A673 (cell line): ENCODE measurements at regions of chr17 and their contacts with region 1.

Region 1: DNA sequence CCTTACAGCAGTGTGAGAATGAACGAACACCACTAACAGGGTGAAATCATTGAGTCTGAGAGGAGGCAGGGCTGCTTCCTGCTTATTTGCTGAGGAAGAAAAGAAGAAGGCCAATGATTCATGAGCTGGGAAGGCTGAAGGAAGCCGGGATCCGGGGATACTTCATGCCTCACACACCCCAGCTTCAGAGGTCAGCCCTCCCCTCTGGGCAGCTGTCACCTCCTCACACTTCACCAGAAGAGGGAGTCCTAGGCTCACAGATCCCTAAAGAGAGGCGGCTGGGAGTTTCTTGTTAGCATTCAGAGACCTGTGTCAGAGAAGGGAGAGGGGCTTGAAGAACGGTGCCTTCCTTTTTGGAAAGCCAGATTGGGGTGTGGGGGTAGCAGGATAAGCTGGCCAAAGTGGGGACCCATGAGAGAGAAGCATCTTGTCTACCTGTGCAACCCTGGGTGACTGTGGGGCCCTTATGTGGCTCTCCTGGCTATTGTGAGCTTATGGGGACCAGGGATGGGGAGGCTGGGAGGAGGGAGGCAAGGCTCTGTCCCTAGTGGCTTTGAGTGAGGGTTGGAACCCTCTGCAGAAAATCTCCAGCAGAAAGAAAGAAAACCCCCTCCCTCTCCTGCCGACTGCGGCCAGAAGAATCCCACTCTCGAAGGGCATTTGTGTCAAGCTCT is 94.6 kb downstream of the RGS9 start:
- DNase-seq: peak; percentile 81
- H3K4me3 ChIP-seq: no peak overlapping the region
- H3K27ac ChIP-seq: no peak overlapping the region
- H3K4me1 ChIP-seq: peaks cover 9% of the 10 kb centered on the region
- H3K27me3 ChIP-seq: no peaks in the 10 kb centered on the region
- CTCF ChIP-seq: peak; percentile 82

Region 2: DNA sequence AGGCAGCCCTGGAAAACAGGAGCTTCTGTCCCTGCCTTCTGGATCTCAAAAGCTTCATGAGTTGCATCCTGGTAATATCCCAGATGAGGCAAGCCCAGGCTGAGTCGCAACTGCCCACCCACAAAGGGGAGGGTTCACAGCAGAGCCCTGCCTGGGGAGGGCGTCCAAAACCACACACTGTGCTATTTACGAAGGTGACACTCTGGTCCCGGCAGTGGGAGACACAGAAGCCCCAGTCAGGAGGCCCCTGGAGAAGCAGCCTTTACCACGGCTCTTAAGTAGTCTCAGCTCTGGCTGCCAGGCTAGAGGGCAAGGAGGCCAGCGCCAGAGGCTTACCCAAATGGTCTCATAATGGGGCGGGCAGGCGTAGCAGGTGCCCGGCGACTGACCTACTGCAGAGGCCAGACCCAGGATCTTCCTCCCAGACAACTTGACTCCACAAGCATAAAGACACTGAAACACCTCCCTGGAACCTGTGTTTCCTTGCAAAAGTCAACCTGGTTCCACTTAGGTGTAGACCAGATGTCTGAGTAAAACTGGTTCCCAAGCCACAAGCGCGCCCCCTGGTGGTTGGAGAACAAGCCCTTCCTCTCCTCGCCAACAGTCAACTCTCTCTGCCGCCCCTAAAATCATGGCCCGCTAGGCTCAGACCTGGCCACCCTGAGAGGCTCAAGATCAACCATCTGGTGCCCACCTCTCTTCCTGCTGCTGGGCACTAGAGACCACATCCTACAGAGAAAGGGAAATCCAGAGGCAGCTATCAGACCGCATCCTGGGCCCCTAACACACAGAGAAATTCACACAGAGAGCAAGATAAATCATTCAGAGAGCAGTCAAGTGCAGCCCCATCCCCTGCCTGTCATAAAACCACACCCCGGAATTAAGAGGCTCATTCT is 324.5 kb after region 1 on chr17:
- CTCF ChIA-PET with region 1: no interaction called
- POLR2A ChIA-PET with region 1: no interaction called
- intact Hi-C with region 1: loop called (anchors 2 kb)
- DNase-seq: peak; percentile 83
- H3K4me3 ChIP-seq: no peak overlapping the region
- H3K27ac ChIP-seq: no peak overlapping the region
- H3K4me1 ChIP-seq: peaks cover 15% of the 10 kb centered on the region
- H3K27me3 ChIP-seq: no peaks in the 10 kb centered on the region
- CTCF ChIP-seq: peak; percentile 92

Region 3: DNA sequence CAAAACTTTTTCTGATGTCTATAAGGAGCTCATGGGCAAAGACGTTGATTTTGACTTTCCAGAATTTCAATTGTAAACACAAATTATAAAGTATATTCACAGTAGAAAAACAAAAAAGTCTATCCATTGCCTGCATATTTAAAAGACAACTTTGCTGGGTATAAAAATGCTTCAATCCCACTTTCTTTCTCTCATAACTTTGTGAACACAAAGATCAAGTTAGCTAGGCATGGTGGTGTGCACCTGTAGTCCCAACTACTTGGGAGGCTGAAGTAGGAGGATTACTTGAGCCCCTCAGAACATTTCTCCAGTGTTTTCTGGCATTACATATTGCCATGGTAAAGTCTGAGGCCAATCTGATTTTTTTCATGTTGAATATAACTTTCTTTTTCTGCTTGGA is 412.7 kb after region 1 on chr17:
- CTCF ChIA-PET with region 1: no interaction called
- POLR2A ChIA-PET with region 1: no interaction called
- intact Hi-C with region 1: no loop called
- DNase-seq: no peak
- H3K4me3 ChIP-seq: no peak overlapping the region
- H3K27ac ChIP-seq: no peak overlapping the region
- H3K4me1 ChIP-seq: no peaks in the 10 kb centered on the region
- H3K27me3 ChIP-seq: no peaks in the 10 kb centered on the region
- CTCF ChIP-seq: no peak

Region 4: GRCh38 chr17:65988081-65988850 is 756.5 kb after region 1 on chr17:
- CTCF ChIA-PET with region 1: no interaction called
- POLR2A ChIA-PET with region 1: no interaction called
- intact Hi-C with region 1: loop called (anchors 5 kb)
- DNase-seq: peak; percentile 49
- H3K4me3 ChIP-seq: no peak overlapping the region
- H3K27ac ChIP-seq: no peak overlapping the region
- H3K4me1 ChIP-seq: no peaks in the 10 kb centered on the region
- H3K27me3 ChIP-seq: no peaks in the 10 kb centered on the region
- CTCF ChIP-seq: peak; percentile 64

Region 5: GRCh38 chr17:66165513-66166123 is 933.8 kb after region 1 on chr17:
- CTCF ChIA-PET with region 1: interaction called, 7 read pairs
- POLR2A ChIA-PET with region 1: no interaction called
- intact Hi-C with region 1: loop called (anchors 5 kb)
- DNase-seq: peak; percentile 72
- H3K4me3 ChIP-seq: no peak overlapping the region
- H3K27ac ChIP-seq: no peak overlapping the region
- H3K4me1 ChIP-seq: no peaks in the 10 kb centered on the region
- H3K27me3 ChIP-seq: no peaks in the 10 kb centered on the region
- CTCF ChIP-seq: peak; percentile 76

Region 6: DNA sequence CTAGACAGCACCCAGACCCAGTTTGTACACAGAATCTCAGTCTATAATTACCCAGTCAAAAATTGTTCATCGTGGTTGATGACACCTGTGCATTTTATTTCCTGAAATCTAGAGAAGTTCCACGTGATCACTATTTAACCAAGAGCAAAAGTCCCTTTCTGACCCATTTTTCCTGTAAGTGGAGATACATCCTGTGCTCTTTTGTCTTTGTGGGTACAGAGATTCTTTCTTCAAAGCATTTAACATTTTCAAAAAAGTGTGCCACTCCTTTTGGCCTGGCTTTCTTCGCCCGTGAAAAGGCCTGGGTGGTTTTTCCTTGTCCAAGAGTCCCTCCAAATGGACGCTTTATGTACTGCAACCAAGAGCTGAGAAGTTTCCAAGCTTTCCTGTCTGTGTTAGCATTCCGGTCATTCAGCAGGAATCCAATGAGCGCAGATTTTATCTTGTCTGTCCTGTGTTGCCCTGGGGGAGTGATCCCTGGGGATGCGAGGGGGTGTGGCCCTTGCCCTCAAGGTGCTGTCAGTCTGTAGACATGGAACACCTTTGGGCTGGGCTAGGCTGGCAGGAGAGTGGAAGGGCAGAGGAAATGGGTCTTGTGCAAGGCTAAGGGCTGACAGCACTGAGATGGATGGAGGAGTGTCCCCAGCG is 1442.0 kb after region 1 on chr17:
- CTCF ChIA-PET with region 1: no interaction called
- POLR2A ChIA-PET with region 1: no interaction called
- intact Hi-C with region 1: loop called (anchors 5 kb)
- DNase-seq: peak; percentile 78
- H3K4me3 ChIP-seq: no peak overlapping the region
- H3K27ac ChIP-seq: no peak overlapping the region
- H3K4me1 ChIP-seq: peaks cover 5% of the 10 kb centered on the region
- H3K27me3 ChIP-seq: no peaks in the 10 kb centered on the region
- CTCF ChIP-seq: peak; percentile 82